BJ (cell line): ENCODE measurements at regions of chr10 and their contacts with region 1.

Region 1: GRCh38 chr10:51074238-51075028 is at the start of gene PRKG1:
- DNase-seq: peak; percentile 39
- H3K4me3 ChIP-seq: peak within 1 kb of the TSS; percentile 51
- H3K27me3 ChIP-seq: no peaks in the 10 kb centered on the region
- CTCF ChIP-seq: no peak
- polyA plus RNA-seq, gene PRKG1: 9.7 and 11.6 TPM in 2 replicates

Region 2: DNA sequence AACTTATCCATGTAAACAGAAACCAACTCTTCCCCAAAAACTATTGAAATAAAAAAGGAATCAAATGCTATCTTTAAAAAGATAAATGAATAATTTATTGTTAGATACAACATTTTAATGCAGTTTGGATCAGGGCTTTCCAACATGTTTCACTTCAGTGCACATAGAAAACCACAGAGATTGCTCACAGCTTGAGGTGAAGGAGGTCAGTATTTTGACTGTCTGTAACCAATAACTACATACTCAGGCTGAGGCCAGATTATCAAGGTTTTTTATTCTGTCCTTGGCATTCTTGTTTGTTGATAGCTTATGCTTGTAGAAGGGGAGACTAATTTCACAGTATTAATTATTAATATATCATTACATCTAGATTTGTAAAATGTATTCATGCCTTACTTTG is 195.4 kb after region 1 on chr10:
- CTCF ChIA-PET with region 1: no interaction called
- POLR2A ChIA-PET with region 1: no interaction called
- DNase-seq: no peak
- H3K4me3 ChIP-seq: no peak overlapping the region
- H3K27me3 ChIP-seq: no peaks in the 10 kb centered on the region
- CTCF ChIP-seq: no peak

Region 3: DNA sequence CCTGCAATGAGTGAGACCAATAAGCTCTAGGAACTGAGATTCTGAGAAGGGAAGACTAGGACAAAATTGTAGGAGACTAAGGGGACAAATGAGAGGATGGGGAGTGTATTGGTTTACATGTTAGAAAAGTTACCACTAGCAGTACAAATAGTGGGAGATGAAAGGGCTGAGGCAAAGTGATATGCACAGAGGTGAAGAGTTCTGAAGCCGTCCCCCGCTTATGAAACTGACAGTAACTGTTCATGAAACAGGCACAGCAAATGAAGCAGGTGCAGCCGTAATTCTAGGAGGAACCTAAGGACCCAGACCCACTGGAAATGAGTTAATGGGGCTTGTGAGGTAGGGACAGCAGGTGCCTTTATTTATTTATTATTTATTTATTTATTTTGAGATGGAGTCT is 211.2 kb after region 1 on chr10:
- CTCF ChIA-PET with region 1: no interaction called
- POLR2A ChIA-PET with region 1: no interaction called
- DNase-seq: no peak
- H3K4me3 ChIP-seq: no peak overlapping the region
- H3K27me3 ChIP-seq: no peaks in the 10 kb centered on the region
- CTCF ChIP-seq: no peak

Region 4: DNA sequence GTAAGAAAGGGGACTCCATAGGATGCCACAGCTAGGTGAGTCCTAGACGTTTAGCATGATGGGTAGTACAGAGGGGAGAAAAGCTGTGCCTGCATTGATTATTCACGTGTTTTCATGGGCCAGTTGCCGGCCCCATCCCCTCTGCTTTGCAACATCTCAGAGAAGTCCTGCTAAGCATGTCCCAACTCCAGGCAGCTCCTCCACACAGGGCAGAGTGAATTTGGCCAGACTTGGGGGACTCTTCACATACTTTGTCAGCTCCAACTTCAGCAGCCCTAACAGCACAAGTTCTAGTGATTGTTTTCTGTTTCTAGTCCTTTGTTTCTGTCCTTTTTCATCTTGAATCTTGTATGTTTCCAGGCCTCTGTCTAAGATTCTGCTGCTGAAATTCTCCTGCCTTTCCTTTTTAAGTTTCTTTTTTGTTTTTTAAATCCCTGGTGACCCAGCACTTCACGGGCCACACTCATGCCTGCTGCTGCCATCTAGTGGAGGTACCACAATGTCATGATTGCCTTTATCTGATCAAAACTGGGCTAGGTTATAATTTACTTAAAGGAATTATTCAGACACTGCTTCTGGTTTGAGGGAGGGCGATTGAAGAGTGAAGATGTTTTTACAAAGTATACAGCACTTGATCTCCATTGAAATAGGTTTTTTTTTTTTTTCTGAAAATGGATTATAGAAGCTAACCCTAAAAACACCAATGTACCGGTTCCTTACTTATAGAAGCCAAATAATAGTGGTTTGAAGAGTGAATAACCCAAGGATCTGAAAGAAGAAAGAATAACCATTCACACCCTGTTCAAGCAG is 348.1 kb after region 1 on chr10:
- CTCF ChIA-PET with region 1: interaction called, 15 read pairs
- POLR2A ChIA-PET with region 1: no interaction called
- DNase-seq: no peak
- H3K4me3 ChIP-seq: no peak overlapping the region
- H3K27me3 ChIP-seq: no peaks in the 10 kb centered on the region
- CTCF ChIP-seq: peak; percentile 81